HAP-1 (cell line): ENCODE measurements at regions of chr16 and their contacts with region 1.

Region 1: DNA sequence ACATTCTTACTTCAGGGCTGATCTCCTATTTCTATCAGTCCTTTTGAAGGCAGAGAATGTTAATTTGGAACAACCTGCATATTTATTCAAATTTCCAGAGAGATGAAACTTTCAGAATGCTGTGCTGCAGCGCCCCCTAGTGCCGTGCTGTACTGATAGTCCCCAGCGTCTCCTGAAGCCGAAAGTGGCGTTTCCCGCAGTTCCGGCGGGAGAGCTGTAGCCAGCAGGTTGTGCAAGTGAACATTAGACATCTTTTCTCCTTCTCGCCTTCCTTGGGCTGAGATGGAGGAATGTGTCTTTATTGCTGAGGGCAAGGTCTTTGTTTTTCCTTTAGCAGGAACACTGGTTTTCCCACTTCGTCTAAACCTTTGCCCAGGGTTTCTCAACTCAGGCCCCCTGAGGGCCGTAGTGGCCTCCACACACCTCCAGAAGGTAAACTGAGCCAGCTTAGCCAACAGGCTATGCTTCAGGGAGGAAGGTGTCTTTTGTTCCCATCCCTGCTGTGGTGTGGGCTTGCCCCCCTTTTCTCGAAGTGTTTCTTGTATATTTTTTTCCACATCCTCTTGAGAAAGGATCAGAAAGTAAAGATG is 26.4 kb downstream of the USP10 start:
- DNase-seq: peak; percentile 81 to 94
- H3K4me3 ChIP-seq: no peak overlapping the region
- H3K4me1 ChIP-seq: peaks cover 57% of the 10 kb centered on the region
- H3K27me3 ChIP-seq: no peaks in the 10 kb centered on the region

Region 2: GRCh38 chr16:84504420-84505248 is 221.5 kb before region 1 on chr16 and contains the start of gene MEAK7:
- in situ Hi-C with region 1: loop called (anchors 5 kb)
- DNase-seq: peak; percentile 95 to 99
- H3K4me3 ChIP-seq: peak within 1 kb of the TSS; percentile 81
- H3K4me1 ChIP-seq: peaks cover 15% of the 10 kb centered on the region
- H3K27me3 ChIP-seq: no peaks in the 10 kb centered on the region

Region 3: DNA sequence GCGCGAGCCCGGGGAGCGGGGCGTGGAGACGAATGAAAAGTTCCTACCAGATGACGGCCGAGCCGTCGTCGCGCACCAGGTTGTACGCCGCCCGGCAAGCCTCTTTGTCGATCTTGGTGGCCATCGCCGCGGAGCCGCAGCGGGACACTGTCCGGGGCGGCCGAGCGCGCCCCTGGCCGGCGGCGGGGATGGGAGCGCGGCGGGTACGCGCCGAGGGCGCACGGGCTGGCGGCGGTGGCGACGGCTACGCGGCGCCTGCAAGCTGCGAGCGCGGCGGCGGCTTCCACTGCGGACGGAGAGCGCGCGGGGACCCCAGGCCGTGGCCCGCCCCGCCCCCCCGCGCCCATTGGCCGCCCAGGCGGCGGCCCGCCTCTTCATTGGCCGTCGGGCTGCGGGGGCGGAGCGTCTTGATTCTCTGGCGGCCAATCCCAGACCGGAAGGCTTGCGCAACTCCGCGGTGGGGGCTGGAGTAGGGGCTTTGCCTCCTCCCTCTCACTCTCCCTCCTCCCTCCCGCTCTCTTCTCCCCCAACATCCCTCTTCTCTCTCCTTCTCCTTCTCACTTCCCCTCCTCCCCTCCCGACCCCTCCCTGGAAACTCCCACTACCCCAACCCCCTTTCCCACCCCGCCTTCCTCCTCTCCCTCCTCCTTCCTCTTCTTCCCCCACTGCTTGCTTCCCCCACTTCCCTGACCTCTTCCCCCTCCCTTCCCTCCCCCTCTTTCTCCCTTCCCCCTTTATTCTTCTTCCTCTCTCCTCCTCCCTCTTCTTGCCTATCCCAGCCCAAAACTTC is 108.2 kb before region 1 on chr16 and contains the start of gene COTL1:
- in situ Hi-C with region 1: loop called (anchors 5 kb)
- DNase-seq: peak; percentile 84 to 97
- H3K4me3 ChIP-seq: peak within 1 kb of the TSS; percentile 68
- H3K4me1 ChIP-seq: peaks cover 9% of the 10 kb centered on the region
- H3K27me3 ChIP-seq: no peaks in the 10 kb centered on the region

Region 4: GRCh38 chr16:84633622-84634021 is 92.6 kb before region 1 on chr16:
- in situ Hi-C with region 1: no loop called
- DNase-seq: no peak
- H3K4me3 ChIP-seq: no peak overlapping the region
- H3K4me1 ChIP-seq: no peaks in the 10 kb centered on the region
- H3K27me3 ChIP-seq: no peaks in the 10 kb centered on the region

Region 5: DNA sequence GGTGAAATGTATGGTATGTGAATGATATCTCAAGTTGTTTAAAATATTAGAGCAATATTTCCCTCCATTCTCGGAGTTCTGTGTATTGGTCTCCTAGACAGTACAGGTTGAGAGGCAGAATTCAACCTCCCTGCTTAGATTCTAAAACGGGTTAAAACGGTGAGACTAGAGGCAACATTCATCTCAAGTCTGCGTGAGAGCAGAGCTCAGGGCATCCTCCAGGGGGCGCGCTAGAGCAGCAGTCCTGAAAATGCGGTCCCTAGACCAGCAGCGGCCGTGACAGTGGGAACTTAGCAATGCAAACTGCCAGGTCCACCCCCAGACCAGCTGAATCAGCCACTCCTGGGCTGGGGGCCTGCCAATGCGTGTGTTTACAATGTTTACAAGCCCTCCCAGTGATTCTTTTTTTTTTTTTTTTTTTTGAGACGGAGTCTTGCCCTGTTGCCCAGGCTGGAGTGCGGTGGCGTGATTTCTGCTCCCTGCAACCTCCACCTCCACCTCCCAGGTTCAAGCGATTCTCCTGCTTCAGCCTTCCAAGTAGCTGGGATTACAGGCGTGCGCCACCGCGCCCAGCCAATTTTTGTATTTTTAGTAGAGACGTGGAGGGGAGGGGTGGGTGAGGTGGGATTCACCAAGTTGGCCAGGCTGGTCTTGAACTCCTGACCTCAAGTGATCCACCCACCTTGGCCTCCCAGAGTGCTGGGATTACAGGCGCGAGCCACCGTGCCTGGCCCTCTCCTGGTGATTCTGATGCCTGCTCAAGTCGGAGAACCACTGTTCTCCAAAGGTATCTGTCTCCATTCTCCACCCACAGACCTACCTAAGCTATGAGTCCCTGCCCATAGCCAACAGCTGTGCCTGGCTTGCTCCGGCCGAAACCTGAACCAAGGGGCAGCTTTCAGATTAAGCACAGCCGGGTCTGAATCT is 53.6 kb before region 1 on chr16:
- in situ Hi-C with region 1: loop called (anchors 5 kb)
- DNase-seq: peak; percentile 48 to 90
- H3K4me3 ChIP-seq: no peak overlapping the region
- H3K4me1 ChIP-seq: peaks cover 5% of the 10 kb centered on the region
- H3K27me3 ChIP-seq: no peaks in the 10 kb centered on the region

Region 6: GRCh38 chr16:86242244-86243122 is 1516.3 kb after region 1 on chr16:
- in situ Hi-C with region 1: no loop called
- DNase-seq: no peak
- H3K4me3 ChIP-seq: no peak overlapping the region
- H3K4me1 ChIP-seq: no peaks in the 10 kb centered on the region
- H3K27me3 ChIP-seq: peaks cover 18% of the 10 kb centered on the region